Naive thymus-derived CD4-positive, alpha-beta T cell (primary cell): ENCODE measurements at regions of chr3 and their contacts with region 1.

Region 1: GRCh38 chr3:56801662-56802377 is at the start of gene ARHGEF3:
- DNase-seq: peak; percentile 80 to 89 (median 88)
- ATAC-seq: peak; percentile 94
- H3K4me3 ChIP-seq: peak within 1 kb of the TSS; percentile 88
- H3K4me3 Mint-ChIP-seq: peak within 1 kb of the TSS; percentile 93 to 98 (median 96)
- H3K27ac ChIP-seq: peak within 1 kb of the TSS; percentile 83
- H3K27ac Mint-ChIP-seq: peak within 1 kb of the TSS; percentile 82 to 96 (median 91)
- H3K4me1 ChIP-seq: peaks cover 22 to 30% of the 10 kb centered on the region in 2 donors
- H3K4me1 Mint-ChIP-seq: peaks cover 25 to 49% (median 35%) of the 10 kb centered on the region in 7 donors
- H3K27me3 ChIP-seq: no peaks in the 10 kb centered on the region
- H3K27me3 Mint-ChIP-seq: no peaks in the 10 kb centered on the region
- total RNA-seq, gene ARHGEF3: 79.6 to 99.7 (median 87.0) TPM

Region 2: GRCh38 chr3:56339671-56340070 is 462.1 kb before region 1 on chr3:
- CTCF ChIA-PET with region 1: interaction called, 3 read pairs
- POLR2A ChIA-PET with region 1: no interaction called
- intact Hi-C with region 1: loop called in 1 of 2 experiments (anchors 2 kb)
- DNase-seq: no peak
- ATAC-seq: no peak
- H3K4me3 ChIP-seq: no peak overlapping the region
- H3K4me3 Mint-ChIP-seq: no peak overlapping the region
- H3K27ac ChIP-seq: no peak overlapping the region
- H3K27ac Mint-ChIP-seq: no peak overlapping the region
- H3K4me1 ChIP-seq: no peaks in the 10 kb centered on the region
- H3K4me1 Mint-ChIP-seq: no peaks in the 10 kb centered on the region
- H3K27me3 ChIP-seq: no peaks in the 10 kb centered on the region
- H3K27me3 Mint-ChIP-seq: peaks cover 0 to 30% (median 11%) of the 10 kb centered on the region in 5 donors

Region 3: GRCh38 chr3:56693750-56694149 is 108.1 kb before region 1 on chr3:
- CTCF ChIA-PET with region 1: interaction called, 8 read pairs
- POLR2A ChIA-PET with region 1: interaction called, 10 read pairs
- intact Hi-C with region 1: no loop called
- DNase-seq: no peak
- ATAC-seq: peak; percentile 60
- H3K4me3 ChIP-seq: no peak overlapping the region
- H3K4me3 Mint-ChIP-seq: peak overlapping the region; percentile 57 to 90 (median 80)
- H3K27ac ChIP-seq: peak overlapping the region; percentile 26
- H3K27ac Mint-ChIP-seq: peak overlapping the region; percentile 37 to 84 (median 68)
- H3K4me1 ChIP-seq: peaks cover 32 to 36% of the 10 kb centered on the region in 2 donors
- H3K4me1 Mint-ChIP-seq: peaks cover 33 to 49% (median 44%) of the 10 kb centered on the region in 7 donors
- H3K27me3 ChIP-seq: no peaks in the 10 kb centered on the region
- H3K27me3 Mint-ChIP-seq: no peaks in the 10 kb centered on the region

Region 4: DNA sequence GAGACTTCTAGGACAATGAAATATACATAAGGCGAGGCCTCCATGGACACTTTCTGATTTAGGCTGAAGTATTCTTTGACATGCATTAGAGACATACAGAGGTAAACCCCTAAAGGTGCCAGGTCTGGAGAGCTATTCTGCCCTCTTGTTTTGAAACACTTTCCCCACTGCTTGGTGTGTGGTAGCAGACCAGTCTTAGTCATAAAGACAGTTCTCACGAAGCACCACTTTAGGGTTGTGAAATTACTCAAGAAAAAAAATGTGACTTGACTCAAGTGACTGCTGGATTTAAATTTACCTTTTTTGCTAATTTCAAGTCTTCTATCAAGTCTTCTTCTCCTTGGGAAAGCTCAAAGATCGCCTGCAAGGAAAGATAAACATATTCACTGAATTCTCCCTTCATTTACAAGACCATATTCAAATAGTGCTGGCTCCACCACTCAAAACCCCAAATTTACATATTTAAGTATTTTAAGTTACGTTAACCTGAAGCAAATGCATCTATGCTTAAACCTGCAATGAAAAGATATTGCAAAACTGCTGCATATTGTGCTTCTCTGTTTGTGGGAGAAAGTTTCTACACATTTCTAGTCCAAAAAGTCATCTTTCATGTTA is 48.5 kb before region 1 on chr3:
- CTCF ChIA-PET with region 1: interaction called, 73 read pairs
- POLR2A ChIA-PET with region 1: interaction called, 115 read pairs
- intact Hi-C with region 1: loop called (anchors 1 kb)
- DNase-seq: peak in 1 of 9 donors; percentile 31
- ATAC-seq: peak; percentile 74
- H3K4me3 ChIP-seq: no peak overlapping the region
- H3K4me3 Mint-ChIP-seq: peak overlapping the region in 7 of 10 donors; percentile 2 to 97 (median 90)
- H3K27ac ChIP-seq: peak overlapping the region; percentile 28
- H3K27ac Mint-ChIP-seq: peak overlapping the region; percentile 59 to 100 (median 80)
- H3K4me1 ChIP-seq: peaks cover 39 to 40% of the 10 kb centered on the region in 2 donors
- H3K4me1 Mint-ChIP-seq: peaks cover 41 to 80% (median 67%) of the 10 kb centered on the region in 7 donors
- H3K27me3 ChIP-seq: no peaks in the 10 kb centered on the region
- H3K27me3 Mint-ChIP-seq: no peaks in the 10 kb centered on the region

Region 5: DNA sequence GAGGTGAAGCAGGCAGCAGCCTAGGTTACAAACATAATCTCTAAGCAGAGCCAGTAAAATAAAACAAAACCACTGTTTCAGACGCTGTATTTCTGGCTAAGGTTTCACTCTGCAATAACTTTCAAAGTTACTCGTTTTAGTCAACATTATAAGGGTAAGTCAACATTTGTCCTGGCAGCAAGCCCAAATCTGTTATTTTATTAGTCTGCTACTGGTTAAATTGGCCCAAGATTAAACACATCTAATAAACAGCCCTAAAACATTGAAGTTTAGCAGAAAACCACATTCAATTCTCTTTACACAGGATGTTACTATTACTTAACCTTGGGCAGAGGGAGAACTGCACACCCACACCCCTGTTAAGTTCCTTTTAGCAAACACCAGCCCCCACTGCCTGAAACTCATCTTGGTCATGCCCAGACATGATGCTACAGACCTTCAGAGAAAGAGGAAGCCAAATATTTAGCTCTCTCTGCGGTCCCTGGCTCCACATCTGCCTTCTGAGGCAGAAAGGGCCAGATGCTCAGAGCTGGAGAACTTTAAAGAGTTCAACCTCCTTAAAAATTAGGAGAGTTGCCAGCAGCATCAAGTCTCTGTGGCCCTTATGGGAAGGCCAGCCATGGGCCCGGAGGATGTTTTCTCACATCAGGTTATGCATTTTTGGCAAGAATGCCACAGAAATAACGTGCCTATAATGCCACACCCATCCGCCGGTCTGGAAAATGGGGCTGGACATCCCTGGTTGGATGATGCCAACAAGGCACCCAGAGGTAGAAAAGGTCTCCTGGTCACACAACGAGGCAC is 18.0 kb before region 1 on chr3:
- CTCF ChIA-PET with region 1: interaction called, 176 read pairs
- POLR2A ChIA-PET with region 1: interaction called, 286 read pairs
- intact Hi-C with region 1: loop called (anchors 1 kb)
- DNase-seq: peak in 8 of 9 donors; percentile 63 to 86 (median 78)
- ATAC-seq: peak; percentile 95
- H3K4me3 ChIP-seq: peak overlapping the region; percentile 31
- H3K4me3 Mint-ChIP-seq: peak overlapping the region; percentile 38 to 85 (median 78)
- H3K27ac ChIP-seq: peak overlapping the region; percentile 63
- H3K27ac Mint-ChIP-seq: peak overlapping the region; percentile 76 to 98 (median 96)
- H3K4me1 ChIP-seq: peaks cover 94 to 96% of the 10 kb centered on the region in 2 donors
- H3K4me1 Mint-ChIP-seq: peaks cover 76 to 100% (median 98%) of the 10 kb centered on the region in 7 donors
- H3K27me3 ChIP-seq: no peaks in the 10 kb centered on the region
- H3K27me3 Mint-ChIP-seq: peaks cover 0 to 2% (median 0%) of the 10 kb centered on the region in 5 donors

Region 6: DNA sequence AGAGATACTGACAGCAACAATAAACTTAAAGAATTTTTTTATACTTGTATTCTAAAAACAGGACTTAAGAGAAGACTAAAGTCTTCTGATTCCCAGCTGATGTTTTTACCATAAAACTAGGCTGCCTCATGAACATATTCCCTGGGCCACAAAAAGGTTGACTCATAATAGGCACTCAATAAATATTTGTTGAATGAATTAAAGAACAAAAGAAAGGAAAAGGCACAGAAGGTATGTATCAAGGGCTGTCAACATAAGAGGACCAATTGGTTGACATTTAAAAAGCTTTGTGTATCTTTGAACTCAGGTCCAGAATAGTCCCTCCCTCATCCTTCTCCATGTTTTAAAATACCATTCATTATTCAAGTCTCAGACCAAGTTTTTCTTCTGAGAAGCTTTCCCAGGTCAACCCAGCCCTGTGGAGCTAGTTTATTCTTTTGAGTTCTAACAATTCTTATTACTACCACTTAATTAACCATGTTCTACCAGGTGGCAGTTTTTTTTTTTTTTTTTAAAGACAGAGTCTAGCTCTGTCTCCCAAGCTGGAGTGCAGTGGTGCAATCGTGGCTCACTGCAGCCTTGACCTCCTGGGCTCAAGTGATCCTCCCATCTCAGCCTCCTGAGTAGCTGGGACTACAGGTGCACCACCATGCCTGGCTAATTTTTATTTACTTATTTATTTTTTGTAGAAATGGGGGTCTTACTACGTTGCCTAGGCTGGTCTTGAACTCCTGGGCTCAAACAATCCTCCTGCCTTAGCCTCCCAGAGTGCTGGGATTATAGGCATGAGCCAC is 17.4 kb after region 1 on chr3:
- CTCF ChIA-PET with region 1: interaction called, 4 read pairs
- POLR2A ChIA-PET with region 1: interaction called, 55 read pairs
- intact Hi-C with region 1: no loop called
- DNase-seq: no peak
- ATAC-seq: no peak
- H3K4me3 ChIP-seq: no peak overlapping the region
- H3K4me3 Mint-ChIP-seq: peak overlapping the region in 2 of 10 donors; percentile 2 to 8
- H3K27ac ChIP-seq: no peak overlapping the region
- H3K27ac Mint-ChIP-seq: peak overlapping the region in 7 of 9 donors; percentile 17 to 84 (median 58)
- H3K4me1 ChIP-seq: peaks cover 4 to 23% of the 10 kb centered on the region in 2 donors
- H3K4me1 Mint-ChIP-seq: peaks cover 35 to 87% (median 67%) of the 10 kb centered on the region in 7 donors
- H3K27me3 ChIP-seq: no peaks in the 10 kb centered on the region
- H3K27me3 Mint-ChIP-seq: no peaks in the 10 kb centered on the region

Region 7: DNA sequence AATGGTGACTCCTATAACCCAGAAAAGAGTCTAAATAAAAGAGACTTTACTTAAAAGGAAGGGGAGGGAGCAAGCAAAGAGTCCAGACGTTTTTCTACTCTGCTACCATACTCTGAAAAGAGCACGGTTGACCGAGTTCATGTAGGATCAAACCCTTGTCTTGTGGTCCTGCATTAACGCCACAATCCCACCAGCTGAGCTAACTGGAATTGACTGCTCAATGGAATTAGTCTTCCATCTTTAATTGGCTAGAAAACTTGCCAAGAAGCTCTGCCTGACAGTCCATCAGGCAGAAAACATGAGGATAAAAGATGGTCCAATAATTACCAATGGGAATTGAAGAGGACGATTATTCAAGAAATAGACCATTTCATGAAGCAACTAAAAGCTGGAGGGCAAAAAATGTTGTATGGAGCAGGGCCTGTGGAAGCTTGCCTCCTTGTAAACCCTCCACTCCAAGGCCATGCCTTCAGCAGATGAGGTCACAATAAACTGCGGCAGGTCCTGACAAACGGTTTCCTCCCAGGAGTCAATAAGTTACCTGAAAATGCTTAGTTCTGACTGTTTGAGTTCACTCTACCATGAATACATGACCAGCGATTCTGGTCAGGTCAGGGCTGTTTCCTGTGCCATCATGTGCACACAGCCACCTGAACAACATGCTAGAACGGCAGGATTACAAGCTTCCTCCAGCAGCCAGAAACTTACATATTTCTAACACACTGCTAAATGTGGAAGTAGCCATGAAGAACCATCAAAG is 35.6 kb after region 1 on chr3:
- CTCF ChIA-PET with region 1: no interaction called
- POLR2A ChIA-PET with region 1: no interaction called
- intact Hi-C with region 1: no loop called
- DNase-seq: no peak
- ATAC-seq: no peak
- H3K4me3 ChIP-seq: no peak overlapping the region
- H3K4me3 Mint-ChIP-seq: no peak overlapping the region
- H3K27ac ChIP-seq: no peak overlapping the region
- H3K27ac Mint-ChIP-seq: peak overlapping the region in 2 of 9 donors; percentile 63 to 72
- H3K4me1 ChIP-seq: no peaks in the 10 kb centered on the region
- H3K4me1 Mint-ChIP-seq: peaks cover 12 to 44% (median 34%) of the 10 kb centered on the region in 7 donors
- H3K27me3 ChIP-seq: no peaks in the 10 kb centered on the region
- H3K27me3 Mint-ChIP-seq: no peaks in the 10 kb centered on the region

Region 8: DNA sequence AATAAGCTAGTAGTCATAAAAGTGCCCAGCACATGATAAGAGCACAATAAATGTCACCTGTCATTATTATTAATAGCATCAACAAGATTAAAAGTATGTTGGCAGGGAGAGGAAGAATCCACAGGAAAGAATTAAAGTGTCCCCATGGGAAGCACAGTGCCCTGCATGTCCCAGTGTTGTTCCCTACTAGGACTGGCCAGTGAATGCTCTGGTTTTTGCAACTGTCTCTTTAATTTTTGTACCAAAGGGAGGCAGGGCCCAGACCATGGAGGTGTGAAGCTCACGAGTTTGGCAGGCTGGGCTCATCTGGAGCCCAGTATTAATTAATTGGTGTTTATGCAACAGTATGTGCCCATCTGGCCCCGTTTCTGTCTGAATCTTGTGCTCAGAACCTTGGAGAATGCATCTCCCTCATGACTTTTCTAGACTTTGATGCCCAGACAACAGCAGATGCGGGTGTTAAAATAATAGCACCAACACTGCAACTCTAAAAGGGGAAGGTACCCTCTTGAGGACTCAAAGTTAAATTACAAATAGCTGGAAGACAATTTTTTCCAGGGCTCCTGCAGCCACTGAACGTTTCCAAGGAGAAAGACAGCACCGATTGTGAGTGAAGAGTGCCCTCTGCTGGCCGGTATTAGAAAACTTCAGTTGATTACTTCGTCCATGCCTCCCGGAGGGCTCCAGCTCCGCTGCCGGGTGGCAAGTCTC is 186.8 kb after region 1 on chr3:
- CTCF ChIA-PET with region 1: interaction called, 92 read pairs
- POLR2A ChIA-PET with region 1: interaction called, 43 read pairs
- intact Hi-C with region 1: loop called (anchors 1 kb)
- DNase-seq: peak; percentile 45 to 76 (median 63)
- ATAC-seq: peak; percentile 85
- H3K4me3 ChIP-seq: no peak overlapping the region
- H3K4me3 Mint-ChIP-seq: peak overlapping the region in 5 of 10 donors; percentile 29 to 46 (median 42)
- H3K27ac ChIP-seq: no peak overlapping the region
- H3K27ac Mint-ChIP-seq: peak overlapping the region in 3 of 9 donors; percentile 28 to 81 (median 62)
- H3K4me1 ChIP-seq: peaks cover 3 to 9% of the 10 kb centered on the region in 2 donors
- H3K4me1 Mint-ChIP-seq: peaks cover 5 to 34% (median 18%) of the 10 kb centered on the region in 7 donors
- H3K27me3 ChIP-seq: no peaks in the 10 kb centered on the region
- H3K27me3 Mint-ChIP-seq: peaks cover 0 to 26% (median 5%) of the 10 kb centered on the region in 5 donors